H1 (cell line): ENCODE measurements at regions of chr9 and their contacts with region 1.

Region 1: DNA sequence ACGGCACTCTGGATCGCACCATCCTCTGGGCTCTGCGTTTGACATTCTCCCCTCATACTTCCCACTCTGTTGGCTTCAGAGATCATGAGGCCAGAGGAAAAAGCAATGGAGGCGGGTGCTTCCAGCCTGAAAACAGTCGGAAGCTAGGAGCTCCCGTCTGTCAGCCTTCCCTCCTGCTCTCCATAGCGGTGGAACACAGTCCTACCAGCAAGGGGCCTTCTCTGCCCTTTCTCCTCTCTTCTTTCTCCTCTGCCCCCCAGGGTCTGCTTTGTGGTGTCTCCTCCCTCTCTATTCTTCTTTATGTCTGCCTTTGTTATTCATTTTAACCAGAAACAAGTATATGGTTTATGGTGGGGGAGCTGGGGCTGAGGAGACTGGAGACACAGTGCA is 152.5 kb upstream of the NFIB start:
- DNase-seq: no peak
- H3K4me3 ChIP-seq: no peak overlapping the region
- H3K27ac ChIP-seq: no peak overlapping the region
- H3K4me1 ChIP-seq: peaks cover 6 to 15% (median 11%) of the 10 kb centered on the region in 4 experiments
- H3K27me3 ChIP-seq: no peaks in the 10 kb centered on the region
- CTCF ChIP-seq: no peak
- EP300 ChIP-seq: no peak
- POLR2A ChIP-seq: no peak
- RAD21 ChIP-seq: no peak; a peak in 1 of 4 replicates

Region 2: DNA sequence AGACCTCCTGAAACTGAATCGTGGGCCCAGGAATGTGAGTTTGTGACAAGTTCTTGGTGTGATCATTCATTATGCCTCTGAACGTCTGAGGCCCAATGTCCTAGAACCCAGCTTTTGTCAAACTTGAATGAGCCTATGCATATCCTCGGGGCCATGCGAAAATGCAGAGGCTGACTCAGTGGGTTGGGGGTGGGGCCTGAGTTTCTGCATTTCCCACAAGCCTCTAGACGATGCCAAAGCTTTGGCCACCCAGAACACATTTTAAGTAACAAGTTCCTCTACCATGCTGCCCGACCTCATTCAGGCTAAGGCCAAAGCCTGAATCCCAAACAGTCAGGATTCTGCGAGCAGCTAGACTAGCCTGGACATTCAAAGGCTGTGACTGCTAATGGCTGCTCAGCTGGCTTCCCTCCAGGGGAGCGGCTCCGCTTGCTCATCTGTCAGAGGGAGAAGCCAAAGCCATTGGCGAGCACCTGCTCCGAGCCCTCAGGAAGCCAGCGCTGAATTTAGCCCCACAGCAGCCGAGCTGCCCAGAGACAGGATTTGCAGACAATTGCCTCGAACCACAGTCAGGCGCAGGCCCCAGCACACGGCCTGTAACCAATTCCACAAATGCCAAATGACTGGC is 49.3 kb after region 1 on chr9:
- CTCF ChIA-PET with region 1: interaction called, 17 read pairs
- POLR2A ChIA-PET with region 1: no interaction called
- DNase-seq: peak; percentile 65 to 73
- H3K4me3 ChIP-seq: no peak overlapping the region
- H3K27ac ChIP-seq: no peak overlapping the region
- H3K4me1 ChIP-seq: peaks cover 0 to 17% (median 13%) of the 10 kb centered on the region in 4 experiments; a peak in 6 of 7 replicates
- H3K27me3 ChIP-seq: no peaks in the 10 kb centered on the region
- CTCF ChIP-seq: no peak
- EP300 ChIP-seq: no peak
- POLR2A ChIP-seq: no peak
- RAD21 ChIP-seq: no peak

Region 3: GRCh38 chr9:14616188-14616982 is 150.0 kb after region 1 on chr9:
- CTCF ChIA-PET with region 1: interaction called, 14 read pairs
- POLR2A ChIA-PET with region 1: no interaction called
- DNase-seq: no peak
- H3K4me3 ChIP-seq: no peak overlapping the region
- H3K27ac ChIP-seq: no peak overlapping the region
- H3K4me1 ChIP-seq: no peaks in the 10 kb centered on the region
- H3K27me3 ChIP-seq: no peaks in the 10 kb centered on the region
- CTCF ChIP-seq: peak in 2 of 3 experiments; percentile 48 to 52; a peak in 2 of 4 replicates
- EP300 ChIP-seq: no peak
- POLR2A ChIP-seq: no peak
- RAD21 ChIP-seq: peak; percentile 73 to 76

Region 4: GRCh38 chr9:14652729-14653377 is 186.4 kb after region 1 on chr9:
- CTCF ChIA-PET with region 1: interaction called, 20 read pairs
- POLR2A ChIA-PET with region 1: no interaction called
- DNase-seq: no peak
- H3K4me3 ChIP-seq: no peak overlapping the region
- H3K27ac ChIP-seq: no peak overlapping the region
- H3K4me1 ChIP-seq: no peaks in the 10 kb centered on the region; a peak in 1 of 7 replicates
- H3K27me3 ChIP-seq: no peaks in the 10 kb centered on the region
- CTCF ChIP-seq: peak in 2 of 3 experiments; percentile 55 to 68; a peak in 2 of 4 replicates
- EP300 ChIP-seq: no peak
- POLR2A ChIP-seq: no peak
- RAD21 ChIP-seq: peak; percentile 71 to 76

Region 5: DNA sequence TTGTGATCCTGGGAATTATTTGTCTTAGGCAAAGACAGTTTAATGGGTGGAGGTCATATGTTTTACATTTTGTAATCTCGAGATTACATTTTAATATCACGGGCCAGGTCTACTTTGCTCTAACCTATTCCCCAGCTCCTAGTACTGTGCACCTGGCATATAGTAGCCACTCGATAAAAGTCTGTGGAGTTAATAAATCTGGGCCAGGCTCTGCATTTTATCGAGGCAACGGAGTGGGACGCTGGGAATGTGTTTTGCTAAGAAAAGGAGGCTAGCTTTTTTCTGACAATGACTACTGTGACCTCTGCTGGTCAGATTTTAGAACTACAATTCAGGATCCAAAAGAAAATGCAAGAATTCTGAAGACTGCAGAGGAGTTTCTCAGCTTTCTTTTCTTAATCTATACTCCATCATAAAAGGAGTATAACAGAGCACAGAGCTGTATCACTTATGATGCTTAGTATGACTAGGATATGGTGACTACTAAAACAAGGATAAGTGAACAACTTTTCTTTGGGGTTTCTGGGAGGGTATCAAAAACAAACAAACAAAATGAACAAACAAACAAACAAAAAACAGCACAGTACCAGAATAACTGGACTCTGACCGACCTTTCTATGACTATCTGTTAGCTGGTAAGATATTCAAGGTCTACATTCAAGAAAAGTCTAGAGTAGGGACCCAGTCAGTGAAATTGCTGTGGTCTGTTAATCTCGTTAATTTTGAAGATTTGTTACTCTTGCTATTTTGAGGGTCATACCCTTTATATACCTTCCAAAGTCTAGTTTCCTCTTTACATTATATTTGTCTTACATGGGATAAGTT is 302.2 kb after region 1 on chr9:
- CTCF ChIA-PET with region 1: interaction called, 41 read pairs
- POLR2A ChIA-PET with region 1: no interaction called
- DNase-seq: no peak
- H3K4me3 ChIP-seq: no peak overlapping the region
- H3K27ac ChIP-seq: no peak overlapping the region
- H3K4me1 ChIP-seq: no peaks in the 10 kb centered on the region
- H3K27me3 ChIP-seq: no peaks in the 10 kb centered on the region
- CTCF ChIP-seq: peak in 2 of 3 experiments; percentile 61; a peak in 2 of 4 replicates
- EP300 ChIP-seq: no peak
- POLR2A ChIP-seq: no peak
- RAD21 ChIP-seq: peak; percentile 85 to 86